ENCODE measurements at regions of chr14 and their contacts with region 1.

Region 1: GRCh38 chr14:105281371-105282097 is 19.3 kb downstream of the BRF1 start:
- DNase-seq: peak; percentile 62 to 76
- ATAC-seq: peak; percentile 60 to 81; a peak in 4 of 6 replicates
- H3K4me3 ChIP-seq: no peak overlapping the region
- H3K27ac ChIP-seq: peak overlapping the region in 1 of 2 experiments; percentile 48; a peak in 1 of 6 replicates
- H3K4me1 ChIP-seq: peaks cover 4% of the 10 kb centered on the region; the same call in 1 of the 3 replicates
- CTCF ChIP-seq: peak; percentile 85
- EP300 ChIP-seq: no peak
- POLR2A ChIP-seq: no peak
- RAD21 ChIP-seq: peak; percentile 83 to 85

Region 2: DNA sequence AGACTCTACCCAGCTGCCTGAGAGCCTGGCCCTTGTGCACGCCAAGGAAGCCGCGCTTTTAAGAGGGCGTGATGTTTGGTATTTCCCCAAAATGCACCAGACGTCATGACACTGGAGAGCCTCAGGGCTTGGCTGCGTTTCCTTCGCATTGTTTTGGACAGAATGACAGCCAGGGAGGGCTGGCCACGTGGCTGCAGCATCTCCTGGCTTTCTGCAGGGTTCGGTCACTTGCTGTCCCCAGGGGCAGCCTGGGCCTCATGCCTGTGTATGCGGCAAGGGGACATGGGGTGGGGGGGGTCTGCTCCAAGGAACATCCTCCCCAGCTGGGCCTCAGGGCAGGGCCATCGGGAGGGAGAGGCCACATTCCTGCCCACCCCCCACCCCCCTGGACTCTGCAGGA is 84.3 kb before region 1 on chr14:
- CTCF ChIA-PET with region 1: interaction called, 26 read pairs
- POLR2A ChIA-PET with region 1: no interaction called
- DNase-seq: peak in 1 of 2 experiments; percentile 47
- ATAC-seq: no peak
- H3K4me3 ChIP-seq: no peak overlapping the region
- H3K27ac ChIP-seq: 0 out of 6 replicates have a peak overlapping the region, but pooled peaks of 1 of the 2 experiments have one; percentile 5
- H3K4me1 ChIP-seq: peaks cover 35% of the 10 kb centered on the region
- CTCF ChIP-seq: no peak
- EP300 ChIP-seq: no peak
- POLR2A ChIP-seq: no peak
- RAD21 ChIP-seq: no peak

Region 3: DNA sequence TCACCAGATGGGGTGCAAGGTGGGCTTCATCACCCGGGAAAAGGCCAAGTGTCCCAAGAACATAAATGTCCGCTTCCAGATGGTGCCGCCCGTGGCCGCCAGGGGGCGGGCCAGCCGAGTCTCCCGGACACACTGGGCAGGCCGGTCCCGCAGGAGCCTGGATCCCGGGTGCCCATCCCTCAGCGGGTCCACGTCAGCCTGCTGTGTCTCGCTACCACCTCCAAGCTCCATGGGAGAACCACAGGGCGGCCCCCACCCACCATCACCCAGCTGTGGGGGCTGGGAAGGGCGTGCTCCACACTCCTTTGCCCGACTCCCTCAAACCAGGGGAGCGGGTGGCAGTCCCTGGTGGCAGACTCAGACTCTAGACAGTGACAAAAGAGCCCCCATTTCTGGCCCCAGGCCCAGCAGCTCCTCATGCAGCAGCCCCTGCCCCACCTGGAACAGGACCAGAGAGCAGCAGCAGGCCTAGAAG is 78.4 kb before region 1 on chr14:
- CTCF ChIA-PET with region 1: interaction called, 17 read pairs
- POLR2A ChIA-PET with region 1: no interaction called
- DNase-seq: peak; percentile 66 to 81
- ATAC-seq: peak; percentile 37 to 75
- H3K4me3 ChIP-seq: no peak overlapping the region
- H3K27ac ChIP-seq: peak overlapping the region in 1 of 2 experiments; percentile 58; a peak in 2 of 6 replicates
- H3K4me1 ChIP-seq: peaks cover 43% of the 10 kb centered on the region
- CTCF ChIP-seq: peak; percentile 89
- EP300 ChIP-seq: no peak
- POLR2A ChIP-seq: no peak
- RAD21 ChIP-seq: peak; percentile 63 to 76

Region 4: GRCh38 chr14:105258846-105259245 is 22.7 kb before region 1 on chr14:
- CTCF ChIA-PET with region 1: interaction called, 32 read pairs
- POLR2A ChIA-PET with region 1: no interaction called
- DNase-seq: peak; percentile 74 to 77
- ATAC-seq: peak; percentile 66 to 73
- H3K4me3 ChIP-seq: no peak overlapping the region
- H3K27ac ChIP-seq: peak overlapping the region in 1 of 2 experiments; percentile 67; a peak in 3 of 6 replicates
- H3K4me1 ChIP-seq: peaks cover 11% of the 10 kb centered on the region
- CTCF ChIP-seq: no peak
- EP300 ChIP-seq: no peak
- POLR2A ChIP-seq: no peak
- RAD21 ChIP-seq: no peak

Region 5: DNA sequence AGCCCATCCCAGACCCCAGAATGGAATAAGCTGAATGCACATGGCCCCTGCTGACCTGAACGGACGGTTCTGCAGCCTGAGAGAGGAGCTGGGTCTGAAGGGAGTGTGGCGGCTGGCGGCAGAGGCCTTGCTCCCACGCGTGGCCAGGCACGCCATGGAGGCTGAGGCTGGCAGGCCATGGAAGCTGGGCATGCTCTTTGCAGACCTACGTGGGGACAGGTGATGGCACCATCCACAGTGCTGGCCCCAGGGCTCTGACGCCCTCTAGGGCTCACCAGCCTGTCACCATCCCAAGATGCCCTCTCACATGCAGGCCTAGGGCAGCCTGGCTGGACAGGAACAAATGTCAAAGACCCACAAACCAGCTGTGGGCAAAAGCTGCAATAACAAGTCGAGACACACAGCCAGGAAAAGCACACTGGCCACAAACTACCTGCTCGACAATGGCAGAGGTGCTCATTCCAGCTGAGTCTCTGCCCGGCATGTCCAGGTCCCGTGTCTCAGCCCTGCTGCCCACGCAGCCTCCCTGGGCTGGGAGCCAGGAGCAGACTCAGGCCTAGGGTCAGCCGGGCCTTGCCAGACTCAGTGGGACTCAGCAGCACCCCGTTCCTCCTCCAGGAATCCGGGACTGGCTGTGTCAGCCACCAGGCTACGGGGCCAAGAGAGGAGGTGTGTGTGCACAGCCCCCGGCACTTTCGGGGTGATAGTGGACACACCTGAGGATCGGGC is 13.6 kb before region 1 on chr14:
- CTCF ChIA-PET with region 1: interaction called, 13 read pairs
- POLR2A ChIA-PET with region 1: no interaction called
- DNase-seq: peak in 1 of 2 experiments; percentile 36
- ATAC-seq: peak; percentile 82 to 86
- H3K4me3 ChIP-seq: no peak overlapping the region
- H3K27ac ChIP-seq: no peak overlapping the region
- H3K4me1 ChIP-seq: no peaks in the 10 kb centered on the region
- CTCF ChIP-seq: peak; percentile 23; the same call in 2 of the 3 replicates
- EP300 ChIP-seq: no peak
- POLR2A ChIP-seq: no peak
- RAD21 ChIP-seq: peak; percentile 30 to 58; a peak in 2 of 5 replicates

Region 6: DNA sequence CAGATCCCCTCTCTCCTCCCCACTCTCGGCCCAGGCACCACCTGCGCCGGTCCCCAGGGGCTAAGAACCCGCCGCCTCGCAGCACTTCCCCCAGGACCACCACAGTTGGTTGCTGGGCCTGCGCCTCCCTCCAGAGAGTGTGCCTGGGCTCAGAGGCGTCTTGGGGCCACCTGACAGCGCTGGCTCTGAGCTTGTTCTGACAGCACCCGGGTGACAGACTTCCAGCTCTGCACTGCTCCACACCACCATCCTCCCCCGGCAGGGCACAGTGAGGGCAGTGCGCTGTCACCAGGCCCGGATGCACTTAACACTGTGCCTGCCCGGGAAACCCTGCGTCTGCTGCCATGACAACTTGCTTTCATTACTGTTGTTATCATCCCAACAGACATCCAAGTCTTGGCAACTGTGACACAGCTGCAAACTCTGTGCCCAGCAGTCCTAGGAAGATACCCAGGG is 12.6 kb after region 1 on chr14:
- CTCF ChIA-PET with region 1: interaction called, 15 read pairs
- POLR2A ChIA-PET with region 1: no interaction called
- DNase-seq: no peak
- ATAC-seq: peak; percentile 42 to 64; a peak in 3 of 6 replicates
- H3K4me3 ChIP-seq: no peak overlapping the region
- H3K27ac ChIP-seq: no peak overlapping the region
- H3K4me1 ChIP-seq: no peaks in the 10 kb centered on the region
- CTCF ChIP-seq: no peak
- EP300 ChIP-seq: no peak
- POLR2A ChIP-seq: no peak
- RAD21 ChIP-seq: no peak

Region 7: GRCh38 chr14:105841022-105842009 is 559.8 kb after region 1 on chr14:
- CTCF ChIA-PET with region 1: no interaction called
- POLR2A ChIA-PET with region 1: no interaction called
- DNase-seq: no peak
- ATAC-seq: peak; percentile 12 to 33; a peak in 2 of 6 replicates
- H3K4me3 ChIP-seq: no peak overlapping the region
- H3K27ac ChIP-seq: no peak overlapping the region
- H3K4me1 ChIP-seq: no peaks in the 10 kb centered on the region
- CTCF ChIP-seq: no peak
- EP300 ChIP-seq: no peak
- POLR2A ChIP-seq: no peak
- RAD21 ChIP-seq: no peak

Measured in A549 (cell line).